IMR-90 (cell line): ENCODE measurements at regions of chr3 and their contacts with region 1.

Region 1: DNA sequence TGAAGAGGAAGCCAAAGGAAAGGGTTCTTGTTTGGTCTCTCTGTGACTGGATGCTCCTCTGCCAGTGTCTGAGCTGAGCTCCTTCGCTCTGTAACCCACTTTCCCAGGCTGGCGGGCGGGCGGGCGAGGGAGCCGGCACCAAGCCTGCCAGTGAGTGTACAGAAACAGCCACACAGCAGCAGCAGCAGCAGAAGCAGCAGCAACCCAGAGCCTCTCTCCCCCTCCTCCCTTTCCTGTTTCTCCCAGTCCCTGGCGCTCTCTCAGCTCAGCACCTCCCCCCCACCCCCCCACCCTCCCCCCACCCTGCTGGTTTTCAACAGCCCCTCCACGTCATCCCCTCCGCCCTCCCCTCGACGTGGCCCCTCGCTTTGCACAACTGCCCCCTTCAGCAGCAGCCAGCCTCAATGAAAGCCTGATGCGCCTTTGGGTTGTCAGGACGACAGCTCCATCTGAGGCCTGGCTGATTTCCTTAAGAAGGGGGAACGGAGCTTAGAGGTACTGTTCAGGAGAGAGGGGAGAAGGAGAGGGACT is at the start of gene LSAMP:
- DNase-seq: peak; percentile 35
- ATAC-seq: peak; percentile 72
- H3K4me3 ChIP-seq: peak within 1 kb of the TSS; percentile 67
- H3K27ac ChIP-seq: peak within 1 kb of the TSS; percentile 43
- H3K4me1 ChIP-seq: peaks cover 5% of the 10 kb centered on the region
- H3K27me3 ChIP-seq: no peaks in the 10 kb centered on the region
- CTCF ChIP-seq: no peak
- POLR2A ChIP-seq: no peak
- RAD21 ChIP-seq: no peak
- total RNA-seq, gene LSAMP: 7.9 and 8.1 TPM in 2 replicates

Region 2: DNA sequence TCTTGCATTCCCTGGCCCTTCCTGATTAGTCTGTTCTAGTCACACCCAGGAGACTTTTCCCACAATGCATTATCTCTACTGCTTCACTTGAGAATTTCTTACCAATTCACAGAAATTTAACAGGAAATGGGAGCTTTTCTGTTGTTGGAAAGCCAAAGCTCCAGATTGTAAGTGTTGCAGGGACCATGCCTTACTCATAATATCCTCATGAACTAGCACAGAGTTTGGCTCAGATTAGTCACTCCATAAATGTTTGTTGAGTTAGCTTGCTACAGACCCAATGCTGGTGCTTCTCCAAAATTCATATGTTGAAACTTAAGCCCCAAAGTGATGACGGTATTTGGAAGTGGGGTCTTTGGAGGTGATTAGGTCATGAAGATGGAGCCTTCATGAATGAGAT is 589.5 kb before region 1 on chr3:
- CTCF ChIA-PET with region 1: no interaction called
- POLR2A ChIA-PET with region 1: no interaction called
- dilution Hi-C with region 1: no loop called
- in situ Hi-C with region 1: no loop called
- intact Hi-C with region 1: loop called (anchors 10 kb)
- DNase-seq: peak; percentile 87
- ATAC-seq: peak; percentile 77
- H3K4me3 ChIP-seq: no peak overlapping the region
- H3K27ac ChIP-seq: peak overlapping the region; percentile 46; the same call in 1 of the 2 replicates
- H3K4me1 ChIP-seq: peaks cover 11% of the 10 kb centered on the region
- H3K27me3 ChIP-seq: no peaks in the 10 kb centered on the region
- CTCF ChIP-seq: no peak
- POLR2A ChIP-seq: no peak
- RAD21 ChIP-seq: no peak

Region 3: GRCh38 chr3:116000311-116000710 is 445.1 kb before region 1 on chr3:
- CTCF ChIA-PET with region 1: no interaction called
- POLR2A ChIA-PET with region 1: no interaction called
- dilution Hi-C with region 1: no loop called
- in situ Hi-C with region 1: no loop called
- intact Hi-C with region 1: loop called (anchors 10 kb)
- DNase-seq: peak; percentile 99
- ATAC-seq: peak; percentile 78
- H3K4me3 ChIP-seq: no peak overlapping the region
- H3K27ac ChIP-seq: no peak overlapping the region
- H3K4me1 ChIP-seq: peaks cover 10% of the 10 kb centered on the region
- H3K27me3 ChIP-seq: no peaks in the 10 kb centered on the region
- CTCF ChIP-seq: no peak
- POLR2A ChIP-seq: peak; percentile 47; the same call in 1 of the 2 replicates
- RAD21 ChIP-seq: peak; percentile 16; the same call in 1 of the 2 replicates

Region 4: DNA sequence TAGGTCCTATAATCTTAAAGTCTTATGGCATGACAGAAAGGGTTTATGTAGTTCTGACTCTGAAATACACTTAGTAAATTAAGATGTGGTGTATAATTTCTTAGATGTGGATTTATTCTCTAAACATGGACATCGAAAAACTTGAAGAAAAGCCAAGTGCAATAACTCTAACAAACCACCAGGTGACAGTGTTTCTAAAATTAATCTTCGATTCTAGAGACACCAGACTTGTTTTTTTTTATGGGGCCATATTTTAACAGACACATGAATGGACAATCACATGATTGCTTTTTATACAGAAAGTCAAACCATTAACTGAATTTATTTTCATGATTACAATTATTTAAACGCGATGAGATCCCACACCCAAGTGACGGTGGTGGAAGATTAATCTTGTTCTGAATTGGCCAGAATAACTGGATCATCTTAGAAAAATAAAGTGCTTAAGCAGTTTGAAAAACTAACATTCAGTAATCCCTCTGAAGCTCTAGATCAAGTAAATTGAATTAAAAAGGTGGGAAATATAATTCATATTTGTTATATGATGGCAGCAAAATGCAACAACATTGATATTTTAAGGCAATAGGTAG is 305.2 kb before region 1 on chr3:
- CTCF ChIA-PET with region 1: no interaction called
- POLR2A ChIA-PET with region 1: no interaction called
- dilution Hi-C with region 1: no loop called
- in situ Hi-C with region 1: loop called (anchors 10 kb)
- intact Hi-C with region 1: loop called (anchors 5 kb)
- DNase-seq: peak; percentile 47
- ATAC-seq: no peak
- H3K4me3 ChIP-seq: no peak overlapping the region
- H3K27ac ChIP-seq: no peak overlapping the region
- H3K4me1 ChIP-seq: no peaks in the 10 kb centered on the region
- H3K27me3 ChIP-seq: no peaks in the 10 kb centered on the region
- CTCF ChIP-seq: peak; percentile 79
- POLR2A ChIP-seq: no peak
- RAD21 ChIP-seq: peak; percentile 66

Region 5: GRCh38 chr3:116148881-116149851 is 296.2 kb before region 1 on chr3:
- CTCF ChIA-PET with region 1: no interaction called
- POLR2A ChIA-PET with region 1: no interaction called
- dilution Hi-C with region 1: no loop called
- in situ Hi-C with region 1: loop called (anchors 10 kb)
- intact Hi-C with region 1: loop called (anchors 5 kb)
- DNase-seq: peak; percentile 63
- ATAC-seq: peak; percentile 84
- H3K4me3 ChIP-seq: peak overlapping the region; percentile 29; the same call in 1 of the 2 replicates
- H3K27ac ChIP-seq: peak overlapping the region; percentile 34
- H3K4me1 ChIP-seq: no peaks in the 10 kb centered on the region
- H3K27me3 ChIP-seq: no peaks in the 10 kb centered on the region
- CTCF ChIP-seq: no peak
- POLR2A ChIP-seq: no peak
- RAD21 ChIP-seq: 0 out of 2 replicates have a peak, but pooled peaks have one; percentile 2

Region 6: GRCh38 chr3:116757315-116757714 is 311.9 kb after region 1 on chr3:
- CTCF ChIA-PET with region 1: no interaction called
- POLR2A ChIA-PET with region 1: no interaction called
- dilution Hi-C with region 1: no loop called
- in situ Hi-C with region 1: no loop called
- intact Hi-C with region 1: loop called (anchors 5 kb)
- DNase-seq: no peak
- ATAC-seq: no peak
- H3K4me3 ChIP-seq: no peak overlapping the region
- H3K27ac ChIP-seq: no peak overlapping the region
- H3K4me1 ChIP-seq: no peaks in the 10 kb centered on the region
- H3K27me3 ChIP-seq: no peaks in the 10 kb centered on the region
- CTCF ChIP-seq: no peak
- POLR2A ChIP-seq: no peak
- RAD21 ChIP-seq: no peak